Transverse colon (tissue), 4 donors: ENCODE measurements at regions of chr19 and their contacts with region 1.

Region 1: DNA sequence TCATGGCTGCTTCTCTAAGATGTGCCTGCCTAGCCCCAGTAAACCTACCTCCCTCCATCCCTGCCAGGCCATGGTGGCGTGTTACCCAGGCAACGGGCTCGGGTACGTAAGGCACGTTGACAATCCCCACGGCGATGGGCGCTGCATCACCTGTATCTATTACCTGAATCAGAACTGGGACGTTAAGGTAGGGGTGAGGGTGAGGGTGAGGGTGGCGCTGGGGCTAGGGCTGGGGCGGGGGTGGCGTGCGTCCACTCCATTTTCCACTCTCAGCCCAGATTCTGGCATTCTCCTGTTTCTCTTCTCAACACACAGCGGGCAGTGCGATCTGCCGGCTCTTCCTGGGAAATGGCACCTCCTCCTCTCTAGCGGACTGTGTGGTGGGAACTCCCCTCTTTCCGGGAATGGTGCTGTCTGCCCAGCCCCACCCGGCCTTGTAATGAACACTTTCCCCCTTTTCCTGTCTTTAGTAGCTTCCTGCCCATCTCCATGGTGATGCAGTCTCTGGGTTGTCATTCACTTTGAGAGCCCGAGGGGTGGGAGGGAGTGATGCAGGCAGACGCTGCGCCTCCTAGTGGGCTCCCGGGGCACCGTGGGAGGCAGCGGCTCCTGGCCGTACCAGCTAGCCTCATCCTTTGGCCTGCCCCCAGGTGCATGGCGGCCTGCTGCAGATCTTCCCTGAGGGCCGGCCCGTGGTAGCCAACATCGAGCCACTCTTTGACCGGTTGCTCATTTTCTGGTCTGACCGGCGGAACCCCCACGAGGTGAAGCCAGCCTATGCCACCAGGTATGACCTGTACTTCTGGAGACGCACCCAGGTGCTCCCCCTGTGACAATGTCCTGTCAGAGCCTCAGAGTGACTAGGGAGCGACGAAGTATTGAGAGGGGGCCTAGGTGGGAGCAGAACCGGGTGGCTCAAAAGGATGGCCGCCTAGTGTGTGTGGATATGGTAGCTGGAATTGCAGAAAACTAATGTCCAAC is 7.8 kb downstream of the EGLN2 start:
- DNase-seq: peak; percentile 76
- H3K4me3 ChIP-seq: no peak overlapping the region
- H3K27ac ChIP-seq: peak overlapping the region; percentile 91 to 97 (median 96)
- H3K4me1 ChIP-seq: peaks cover 54 to 77% (median 62%) of the 10 kb centered on the region in 4 donors
- H3K27me3 ChIP-seq: no peaks in the 10 kb centered on the region
- CTCF ChIP-seq: peak; percentile 70 to 82 (median 74)
- EP300 ChIP-seq: no peak
- POLR2A ChIP-seq: no peak

Region 2: DNA sequence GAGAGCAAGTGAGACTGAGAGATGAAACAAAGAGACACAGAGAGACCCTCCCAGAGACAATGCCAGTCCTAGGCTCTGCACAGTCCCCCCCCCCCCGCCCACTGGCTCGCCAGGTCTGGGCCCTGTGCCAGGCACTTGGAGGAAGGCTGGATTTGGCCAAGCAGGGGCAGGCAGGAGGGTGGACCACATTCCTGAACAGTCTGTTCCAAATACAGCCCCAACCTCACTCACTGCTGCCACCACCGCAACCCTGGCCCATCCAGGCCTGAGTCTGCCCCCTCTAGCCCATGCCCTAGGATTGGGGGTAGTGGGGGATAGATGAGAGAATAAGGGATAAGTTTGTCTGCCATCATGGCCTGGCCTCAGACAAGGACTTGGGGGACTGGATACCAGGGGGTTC is 326.5 kb after region 1 on chr19:
- in situ Hi-C with region 1: no loop called
- intact Hi-C with region 1: loop called (anchors 5 kb)
- DNase-seq: no peak
- H3K4me3 ChIP-seq: no peak overlapping the region
- H3K27ac ChIP-seq: no peak overlapping the region
- H3K4me1 ChIP-seq: peaks cover 0 to 15% (median 3%) of the 10 kb centered on the region in 4 donors
- H3K27me3 ChIP-seq: no peaks in the 10 kb centered on the region
- CTCF ChIP-seq: no peak
- EP300 ChIP-seq: no peak
- POLR2A ChIP-seq: no peak